BJ (cell line): ENCODE measurements at regions of chr1 and their contacts with region 1.

Region 1: GRCh38 chr1:205967555-205968335 is 24.5 kb upstream of the SLC26A9 start:
- DNase-seq: no peak
- H3K4me3 ChIP-seq: no peak overlapping the region
- H3K27me3 ChIP-seq: no peaks in the 10 kb centered on the region
- CTCF ChIP-seq: no peak

Region 2: GRCh38 chr1:205919026-205919746 is 48.6 kb before region 1 on chr1:
- CTCF ChIA-PET with region 1: interaction called, 28 read pairs
- POLR2A ChIA-PET with region 1: no interaction called
- DNase-seq: no peak
- H3K4me3 ChIP-seq: no peak overlapping the region
- H3K27me3 ChIP-seq: no peaks in the 10 kb centered on the region; the same call in 1 of the 2 replicates
- CTCF ChIP-seq: peak; percentile 88